Activated naive CD4-positive, alpha-beta T cell treated with anti-CD3 and anti-CD28 coated beads, Interleukin-2, amount 10 ng/mL, durations not matched to agents 7 days and 5 days (primary cell): ENCODE measurements at regions of chr10 and their contacts with region 1.

Region 1: DNA sequence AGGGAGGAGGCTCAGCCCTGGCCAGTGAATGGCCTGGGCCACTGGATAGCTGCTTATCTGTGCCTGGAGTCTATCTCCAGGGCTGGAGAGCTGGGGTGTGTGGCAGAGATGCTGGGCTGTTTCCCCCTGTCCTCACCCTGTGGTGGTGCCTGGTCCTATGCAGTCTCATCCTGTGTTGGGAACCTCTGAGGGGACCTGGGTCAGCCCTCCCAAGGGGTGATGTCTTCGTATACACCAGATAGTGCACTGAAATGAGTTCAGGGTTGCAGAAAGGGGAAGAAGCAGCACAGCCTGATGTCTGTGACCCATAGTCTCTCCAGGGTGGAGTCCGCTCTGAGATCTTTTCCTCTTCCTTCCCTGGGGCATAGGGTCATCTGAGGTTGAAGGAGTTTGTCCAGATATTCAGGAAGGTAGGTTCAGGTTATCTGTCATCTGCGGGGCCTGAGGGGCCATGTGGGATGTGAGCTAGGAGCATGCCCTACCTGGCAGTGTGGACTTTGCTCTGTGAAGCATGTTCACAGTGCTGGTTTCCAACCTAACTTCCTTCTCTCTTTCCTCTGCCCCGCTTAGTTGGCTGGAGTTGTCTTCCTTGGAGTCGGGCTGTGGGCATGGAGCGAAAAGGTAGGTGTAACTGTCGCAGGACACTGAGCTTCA is 33.4 kb upstream of the SH2D4B start:
- DNase-seq: no peak
- H3K4me3 Mint-ChIP-seq: no peak overlapping the region
- H3K27ac Mint-ChIP-seq: peak overlapping the region; percentile 88
- H3K4me1 Mint-ChIP-seq: peaks cover 77% of the 10 kb centered on the region
- H3K27me3 Mint-ChIP-seq: no peaks in the 10 kb centered on the region

Region 2: GRCh38 chr10:80382989-80383388 is 121.3 kb before region 1 on chr10:
- CTCF ChIA-PET with region 1: interaction called, 28 read pairs
- DNase-seq: peak; percentile 71
- H3K4me3 Mint-ChIP-seq: no peak overlapping the region
- H3K27ac Mint-ChIP-seq: no peak overlapping the region
- H3K4me1 Mint-ChIP-seq: peaks cover 18% of the 10 kb centered on the region
- H3K27me3 Mint-ChIP-seq: peaks cover 5% of the 10 kb centered on the region

Region 3: DNA sequence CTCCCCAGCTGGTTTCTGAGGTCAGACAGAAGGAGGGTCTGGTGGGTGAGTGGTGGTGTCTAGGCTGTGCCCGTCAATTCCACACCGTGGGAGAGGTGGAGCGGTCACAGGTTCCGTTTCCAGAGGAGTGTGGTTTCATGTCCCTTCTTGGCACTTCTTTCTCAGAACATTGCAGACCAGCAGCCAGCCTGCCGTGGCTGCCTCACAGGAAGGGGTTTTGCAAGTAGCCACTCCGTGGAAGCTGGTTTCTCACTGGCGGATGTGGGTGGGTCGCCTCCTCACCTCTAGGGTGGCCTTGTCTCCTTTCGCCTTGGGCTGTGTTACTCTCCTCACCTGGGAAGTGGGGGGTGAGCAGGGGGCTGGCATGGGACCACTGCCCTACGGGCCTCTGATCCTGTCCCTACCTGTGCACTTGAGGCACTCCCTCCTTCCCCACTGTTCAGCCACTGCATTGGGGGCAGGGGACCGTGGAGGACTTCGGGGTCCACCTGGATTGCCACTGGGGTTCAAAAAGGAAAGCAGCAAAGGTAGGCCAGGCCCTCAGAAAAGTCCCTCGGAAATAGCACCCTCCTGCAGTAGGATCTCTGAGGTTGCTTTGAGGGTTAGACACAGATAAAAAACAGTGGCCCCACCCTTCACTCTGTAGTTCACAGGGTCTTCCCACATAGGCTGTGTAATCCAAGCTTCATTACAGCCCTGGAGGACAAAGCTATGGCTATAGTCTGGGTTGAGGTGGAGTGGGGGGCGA is 16.3 kb before region 1 on chr10:
- CTCF ChIA-PET with region 1: interaction called, 36 read pairs
- DNase-seq: peak; percentile 82
- H3K4me3 Mint-ChIP-seq: peak overlapping the region; percentile 72
- H3K27ac Mint-ChIP-seq: peak overlapping the region; percentile 95
- H3K4me1 Mint-ChIP-seq: peaks cover 98% of the 10 kb centered on the region
- H3K27me3 Mint-ChIP-seq: no peaks in the 10 kb centered on the region

Region 4: GRCh38 chr10:80493522-80494051 is 10.7 kb before region 1 on chr10:
- CTCF ChIA-PET with region 1: interaction called, 36 read pairs
- DNase-seq: peak; percentile 51
- H3K4me3 Mint-ChIP-seq: peak overlapping the region; percentile 31
- H3K27ac Mint-ChIP-seq: peak overlapping the region; percentile 79
- H3K4me1 Mint-ChIP-seq: peaks cover 99% of the 10 kb centered on the region
- H3K27me3 Mint-ChIP-seq: no peaks in the 10 kb centered on the region

Region 5: DNA sequence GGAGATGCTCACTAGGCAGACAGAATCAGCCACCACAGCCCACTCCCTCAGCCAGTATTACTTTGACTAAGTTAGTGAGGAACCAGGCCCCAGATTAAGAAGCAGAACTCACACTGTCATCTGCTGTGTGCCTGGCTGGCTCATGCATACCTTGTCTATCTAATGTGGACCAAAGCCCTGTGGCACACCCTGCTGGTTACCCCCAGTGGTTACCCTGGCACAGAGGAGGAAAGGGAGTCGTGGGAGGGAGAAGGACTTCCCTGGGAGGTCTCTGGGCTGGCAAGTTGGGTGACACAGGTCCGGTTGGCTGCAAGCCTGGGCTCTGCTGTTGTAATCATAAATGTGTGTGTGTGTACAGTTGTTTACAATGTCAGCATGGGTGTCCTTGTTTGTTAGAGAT is 26.0 kb after region 1 on chr10:
- CTCF ChIA-PET with region 1: interaction called, 14 read pairs
- DNase-seq: peak; percentile 70
- H3K4me3 Mint-ChIP-seq: peak overlapping the region; percentile 42
- H3K27ac Mint-ChIP-seq: peak overlapping the region; percentile 95
- H3K4me1 Mint-ChIP-seq: peaks cover 77% of the 10 kb centered on the region
- H3K27me3 Mint-ChIP-seq: no peaks in the 10 kb centered on the region

Region 6: GRCh38 chr10:80647173-80647811 is 143.0 kb after region 1 on chr10:
- CTCF ChIA-PET with region 1: no interaction called
- DNase-seq: no peak
- H3K4me3 Mint-ChIP-seq: no peak overlapping the region
- H3K27ac Mint-ChIP-seq: no peak overlapping the region
- H3K4me1 Mint-ChIP-seq: no peaks in the 10 kb centered on the region
- H3K27me3 Mint-ChIP-seq: peaks cover 7% of the 10 kb centered on the region